ENCODE measurements at regions of chr3 and their contacts with region 1.

Region 1: GRCh38 chr3:47420511-47421484 is 40.0 kb downstream of the PTPN23 start:
- DNase-seq: peak; percentile 98
- H3K4me3 Mint-ChIP-seq: peak overlapping the region; percentile 52
- H3K27ac Mint-ChIP-seq: peak overlapping the region; percentile 98
- H3K4me1 Mint-ChIP-seq: peaks cover 12% of the 10 kb centered on the region
- H3K27me3 Mint-ChIP-seq: no peaks in the 10 kb centered on the region

Region 2: GRCh38 chr3:47193871-47194859 is 226.6 kb before region 1 on chr3:
- CTCF ChIA-PET with region 1: no interaction called
- intact Hi-C with region 1: no loop called
- DNase-seq: no peak
- H3K4me3 Mint-ChIP-seq: no peak overlapping the region
- H3K27ac Mint-ChIP-seq: no peak overlapping the region
- H3K4me1 Mint-ChIP-seq: no peaks in the 10 kb centered on the region
- H3K27me3 Mint-ChIP-seq: no peaks in the 10 kb centered on the region

Region 3: DNA sequence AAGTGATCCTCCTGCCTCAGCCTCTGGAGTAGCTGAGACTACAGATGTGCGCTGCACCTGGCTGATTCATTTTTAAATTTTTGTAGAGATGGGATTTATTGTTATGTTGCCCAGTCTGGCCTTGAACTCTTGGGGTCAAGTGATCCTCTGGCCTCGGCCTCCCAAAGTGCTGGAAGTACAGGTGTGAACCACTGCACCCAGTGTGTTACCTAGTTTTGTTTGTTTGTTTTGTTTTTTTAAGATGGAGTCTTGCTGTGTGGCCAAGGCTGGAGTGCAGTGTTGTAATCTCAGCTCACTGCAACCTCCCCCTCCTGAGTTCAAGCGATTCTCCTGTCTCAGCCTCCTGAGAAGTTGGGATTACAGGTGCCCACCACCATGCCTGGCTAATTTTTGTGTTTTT is 27.9 kb before region 1 on chr3:
- CTCF ChIA-PET with region 1: interaction called, 10 read pairs
- intact Hi-C with region 1: no loop called
- DNase-seq: no peak
- H3K4me3 Mint-ChIP-seq: no peak overlapping the region
- H3K27ac Mint-ChIP-seq: no peak overlapping the region
- H3K4me1 Mint-ChIP-seq: peaks cover 33% of the 10 kb centered on the region
- H3K27me3 Mint-ChIP-seq: no peaks in the 10 kb centered on the region

Region 4: GRCh38 chr3:47475570-47476329 is 55.0 kb after region 1 on chr3 and contains the start of gene SCAP:
- CTCF ChIA-PET with region 1: interaction called, 75 read pairs
- intact Hi-C with region 1: loop called (anchors 1 kb)
- DNase-seq: peak; percentile 96
- H3K4me3 Mint-ChIP-seq: peak within 1 kb of the TSS; percentile 86
- H3K27ac Mint-ChIP-seq: peak within 1 kb of the TSS; percentile 83
- H3K4me1 Mint-ChIP-seq: peaks cover 35% of the 10 kb centered on the region
- H3K27me3 Mint-ChIP-seq: no peaks in the 10 kb centered on the region
- total RNA-seq, gene SCAP: 31.6 to 34.7 TPM

Region 5: DNA sequence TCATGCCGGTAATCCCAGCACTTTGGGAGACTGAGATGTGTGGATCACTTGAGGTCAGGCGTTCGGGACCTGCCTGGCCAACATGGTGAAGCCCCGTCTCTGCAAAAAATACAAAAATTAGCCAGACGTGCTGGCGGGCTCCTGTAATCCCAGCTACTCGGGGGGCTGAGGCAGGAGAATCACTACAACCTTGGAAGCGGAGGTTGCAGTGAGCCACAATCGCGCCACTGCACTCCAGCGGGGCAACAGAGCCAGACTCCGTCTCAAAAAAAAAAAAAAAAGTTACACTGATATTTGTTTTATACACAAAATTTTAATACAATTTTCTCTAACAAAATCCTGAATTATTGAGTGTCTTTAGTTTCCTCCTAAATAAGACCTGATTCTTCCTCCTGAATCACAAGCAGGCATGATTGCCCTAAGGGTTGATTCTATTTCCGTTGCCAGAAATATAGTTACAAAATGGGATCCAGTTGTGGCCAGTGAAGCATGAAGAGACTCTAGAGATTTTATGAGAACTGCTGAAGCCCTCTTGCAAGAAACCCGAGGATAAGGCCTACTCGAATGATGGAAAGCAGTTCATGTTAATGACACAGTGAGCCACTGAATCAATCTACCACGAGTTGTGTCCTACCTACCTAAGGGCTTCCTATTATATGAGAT is 370.5 kb after region 1 on chr3:
- CTCF ChIA-PET with region 1: interaction called, 3 read pairs
- intact Hi-C with region 1: loop called (anchors 1 kb)
- DNase-seq: no peak
- H3K4me3 Mint-ChIP-seq: no peak overlapping the region
- H3K27ac Mint-ChIP-seq: no peak overlapping the region
- H3K4me1 Mint-ChIP-seq: no peaks in the 10 kb centered on the region
- H3K27me3 Mint-ChIP-seq: no peaks in the 10 kb centered on the region

Measured in activated naive CD4-positive, alpha-beta T cell treated with anti-CD3 and anti-CD28 coated beads for 36 hours (primary cell).